ENCODE measurements at regions of chr11 and their contacts with region 1.

Region 1: DNA sequence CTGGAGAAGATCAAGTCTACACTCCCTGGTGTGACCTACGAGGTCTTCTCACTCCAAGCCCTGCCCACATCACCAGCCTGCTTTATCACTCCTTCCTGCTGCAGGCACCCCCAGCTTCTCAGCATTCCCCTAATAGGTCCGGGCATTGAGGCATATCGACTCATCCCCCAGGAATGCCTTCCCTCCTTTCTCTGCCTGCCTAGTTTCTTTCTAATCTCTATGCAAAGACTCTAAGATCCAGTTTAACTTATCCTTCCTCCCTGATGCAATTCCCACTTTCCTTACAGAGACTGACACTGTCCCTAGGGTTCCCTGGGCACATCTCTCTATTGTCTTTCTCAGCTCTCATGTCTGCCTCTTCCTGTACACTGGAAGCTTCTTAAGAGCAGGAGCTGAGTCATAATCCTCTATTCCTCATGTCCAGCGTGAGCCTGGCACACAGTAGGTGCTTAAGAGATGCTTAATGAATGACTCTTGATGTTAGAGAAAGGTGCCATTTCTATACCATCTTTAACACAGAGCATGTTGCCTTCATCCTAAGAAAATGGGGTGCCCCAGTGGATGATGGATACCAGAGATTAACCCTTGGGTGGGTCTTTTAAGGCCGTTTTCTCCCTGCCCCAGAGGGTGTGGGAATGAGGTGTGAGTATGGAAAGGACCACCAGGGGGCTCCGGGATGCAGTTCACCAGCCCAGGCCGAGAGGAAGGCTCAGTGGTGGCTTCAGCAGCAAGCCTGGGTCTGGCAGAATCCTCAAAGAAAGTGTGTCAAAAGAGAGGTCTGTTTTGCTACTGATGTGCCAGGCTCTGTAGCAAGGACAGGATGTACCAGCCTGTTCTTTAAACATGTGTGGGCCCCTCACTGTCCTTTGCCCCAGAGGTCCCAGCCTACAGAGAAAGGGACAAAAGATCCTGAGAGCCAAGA is 34.7 kb downstream of the PARVA start:
- DNase-seq: peak; percentile 90
- H3K4me3 ChIP-seq: no peak overlapping the region
- CTCF ChIP-seq: peak; percentile 84

Region 2: DNA sequence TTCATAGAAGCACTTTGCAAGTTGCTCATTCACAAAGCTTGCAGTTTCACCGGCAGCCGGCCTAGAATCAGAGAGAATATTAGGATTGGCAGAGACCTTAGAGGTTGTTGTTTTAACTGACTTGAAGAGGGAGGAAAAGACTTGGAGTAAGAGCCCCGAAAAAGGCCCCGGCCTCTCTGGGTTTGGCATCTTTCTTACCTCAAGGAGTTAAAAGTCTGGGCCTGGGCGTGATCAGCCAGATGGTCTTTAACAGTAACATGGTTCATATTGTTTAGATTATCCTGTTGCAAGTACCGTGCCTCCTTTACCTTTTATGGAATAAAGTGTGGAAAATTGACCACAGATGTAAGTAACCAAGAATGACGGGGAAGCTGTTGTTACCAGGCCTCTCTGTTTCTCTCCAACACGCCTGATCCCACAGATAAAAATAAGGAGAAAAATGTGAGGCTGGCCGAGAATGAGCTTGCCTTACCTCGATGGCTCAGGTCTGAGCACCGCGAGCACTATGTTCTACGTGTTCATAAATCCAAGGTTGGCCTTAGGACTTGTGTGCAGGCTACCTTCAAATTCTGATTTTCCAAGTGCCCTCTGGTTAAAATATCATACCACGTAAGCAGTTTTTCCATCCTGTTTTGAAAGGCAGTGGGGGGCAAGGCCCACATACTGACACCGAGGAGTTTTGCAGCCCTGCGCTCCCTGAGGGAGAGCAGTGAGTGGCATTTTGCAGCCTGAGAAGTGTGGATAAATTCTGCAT is 21.7 kb after region 1 on chr11:
- CTCF ChIA-PET with region 1: interaction called, 10 read pairs
- POLR2A ChIA-PET with region 1: no interaction called
- DNase-seq: peak; percentile 90
- H3K4me3 ChIP-seq: no peak overlapping the region
- CTCF ChIP-seq: no peak